Activated naive CD4-positive, alpha-beta T cell treated with anti-CD3 and anti-CD28 coated beads, Interleukin-2, amount 10 ng/mL, durations not matched to agents 7 days and 5 days (primary cell): ENCODE measurements at regions of chr13 and their contacts with region 1.

Region 1: DNA sequence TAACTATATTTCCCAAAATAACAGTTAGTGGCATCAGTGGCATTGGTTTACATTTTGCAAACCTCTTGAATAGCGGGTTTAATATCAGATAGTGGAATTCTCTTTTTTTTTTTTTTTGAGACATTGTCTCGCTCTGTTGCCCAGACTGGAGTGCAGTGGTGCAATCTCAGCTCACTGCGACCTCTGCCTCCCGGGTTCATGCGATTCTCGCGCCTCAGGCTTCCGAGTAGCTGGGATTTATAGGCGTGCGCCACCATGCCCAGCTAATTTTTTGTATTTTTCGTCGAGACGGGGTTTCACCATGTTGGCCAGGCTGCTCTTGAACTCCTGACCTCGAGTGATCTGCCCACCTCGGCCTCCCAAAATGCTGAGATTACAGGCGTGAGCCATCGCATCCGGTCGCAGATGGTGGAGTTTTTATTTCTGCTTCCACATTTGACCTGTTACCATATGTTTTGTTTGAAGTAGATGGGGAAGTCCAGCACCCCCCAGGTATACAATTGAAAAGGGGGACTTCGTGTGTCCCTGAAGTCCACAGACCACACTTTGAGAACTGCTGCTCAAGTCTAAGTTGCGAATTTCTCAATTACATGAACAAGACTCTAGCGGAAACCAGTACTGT is 40.5 kb upstream of the XPO4 start:
- DNase-seq: no peak
- H3K4me3 Mint-ChIP-seq: no peak overlapping the region
- H3K27ac Mint-ChIP-seq: no peak overlapping the region
- H3K4me1 Mint-ChIP-seq: peaks cover 9% of the 10 kb centered on the region
- H3K27me3 Mint-ChIP-seq: peaks cover 41% of the 10 kb centered on the region

Region 2: GRCh38 chr13:20969182-20969581 is 26.1 kb after region 1 on chr13:
- CTCF ChIA-PET with region 1: no interaction called
- DNase-seq: no peak
- H3K4me3 Mint-ChIP-seq: no peak overlapping the region
- H3K27ac Mint-ChIP-seq: no peak overlapping the region
- H3K4me1 Mint-ChIP-seq: peaks cover 11% of the 10 kb centered on the region
- H3K27me3 Mint-ChIP-seq: peaks cover 12% of the 10 kb centered on the region

Region 3: GRCh38 chr13:21133077-21133476 is 190.0 kb after region 1 on chr13:
- CTCF ChIA-PET with region 1: interaction called, 22 read pairs
- DNase-seq: no peak
- H3K4me3 Mint-ChIP-seq: no peak overlapping the region
- H3K27ac Mint-ChIP-seq: no peak overlapping the region
- H3K4me1 Mint-ChIP-seq: no peaks in the 10 kb centered on the region
- H3K27me3 Mint-ChIP-seq: peaks cover 44% of the 10 kb centered on the region

Region 4: GRCh38 chr13:21176220-21176982 is 233.4 kb after region 1 on chr13 and contains the starts of genes MRPL57 and SKA3:
- CTCF ChIA-PET with region 1: interaction called, 16 read pairs
- DNase-seq: peak; percentile 95
- H3K4me3 Mint-ChIP-seq: peak within 1 kb of the TSS; percentile 97
- H3K27ac Mint-ChIP-seq: peak within 1 kb of the TSS; percentile 96
- H3K4me1 Mint-ChIP-seq: peaks cover 38% of the 10 kb centered on the region
- H3K27me3 Mint-ChIP-seq: peaks cover 6% of the 10 kb centered on the region